ENCODE measurements at regions of chr9 and their contacts with region 1.

Region 1: DNA sequence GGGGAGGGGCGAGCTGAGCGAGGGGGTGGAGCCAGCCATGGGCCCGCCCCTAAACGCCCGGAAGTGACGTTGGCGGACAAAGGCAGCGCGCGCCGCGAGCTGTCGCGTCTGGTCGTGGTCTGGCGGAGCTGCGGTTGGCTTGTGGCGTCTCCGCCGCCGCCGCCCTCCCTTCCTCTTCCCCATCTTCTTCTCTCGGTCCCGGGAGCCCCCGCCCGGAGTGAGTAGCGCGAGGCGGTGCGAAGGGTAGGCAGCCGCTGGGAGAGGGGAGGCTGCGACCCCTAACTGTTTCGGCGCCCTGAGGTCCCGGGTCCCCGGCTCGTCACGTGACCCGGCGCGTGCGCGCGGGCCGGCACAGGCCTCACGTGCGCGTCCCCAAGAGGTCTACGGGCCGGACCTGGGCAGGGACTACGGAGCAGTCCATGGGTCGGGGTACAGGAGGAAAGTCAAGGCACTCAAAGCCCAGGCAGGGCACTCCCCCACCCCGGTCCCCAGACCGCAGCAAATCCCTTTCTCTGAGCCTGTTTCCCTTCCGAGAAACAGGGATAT is at the start of gene NTMT1:
- DNase-seq: peak; percentile 88 to 94 (median 90)
- ATAC-seq: peak; percentile 93
- H3K4me3 ChIP-seq: peak within 1 kb of the TSS; percentile 85
- H3K4me3 Mint-ChIP-seq: peak within 1 kb of the TSS; percentile 85 to 95 (median 88)
- H3K27ac ChIP-seq: peak within 1 kb of the TSS; percentile 89
- H3K27ac Mint-ChIP-seq: peak within 1 kb of the TSS; percentile 88 to 99 (median 94)
- H3K4me1 ChIP-seq: peaks cover 27 to 42% of the 10 kb centered on the region in 2 donors
- H3K4me1 Mint-ChIP-seq: peaks cover 33 to 63% (median 59%) of the 10 kb centered on the region in 7 donors
- H3K27me3 ChIP-seq: no peaks in the 10 kb centered on the region
- H3K27me3 Mint-ChIP-seq: peaks cover 4 to 18% (median 7%) of the 10 kb centered on the region in 5 donors
- total RNA-seq, gene NTMT1: 31.0 to 50.1 (median 34.2) TPM

Region 2: GRCh38 chr9:129080602-129081387 is 545.4 kb before region 1 on chr9 and contains the start of gene DOLPP1:
- CTCF ChIA-PET with region 1: no interaction called
- POLR2A ChIA-PET with region 1: no interaction called
- intact Hi-C with region 1: loop called in 1 of 2 experiments (anchors 1 kb)
- DNase-seq: peak; percentile 96 to 99 (median 99)
- ATAC-seq: peak; percentile 97
- H3K4me3 ChIP-seq: peak within 1 kb of the TSS; percentile 82
- H3K4me3 Mint-ChIP-seq: peak within 1 kb of the TSS; percentile 88 to 94 (median 90)
- H3K27ac ChIP-seq: peak within 1 kb of the TSS; percentile 79
- H3K27ac Mint-ChIP-seq: peak within 1 kb of the TSS; percentile 69 to 93 (median 87)
- H3K4me1 ChIP-seq: peaks cover 19 to 20% of the 10 kb centered on the region in 2 donors
- H3K4me1 Mint-ChIP-seq: peaks cover 6 to 41% (median 26%) of the 10 kb centered on the region in 7 donors
- H3K27me3 ChIP-seq: no peaks in the 10 kb centered on the region
- H3K27me3 Mint-ChIP-seq: no peaks in the 10 kb centered on the region
- total RNA-seq, gene DOLPP1: 5.7 to 17.1 (median 11.9) TPM

Region 3: DNA sequence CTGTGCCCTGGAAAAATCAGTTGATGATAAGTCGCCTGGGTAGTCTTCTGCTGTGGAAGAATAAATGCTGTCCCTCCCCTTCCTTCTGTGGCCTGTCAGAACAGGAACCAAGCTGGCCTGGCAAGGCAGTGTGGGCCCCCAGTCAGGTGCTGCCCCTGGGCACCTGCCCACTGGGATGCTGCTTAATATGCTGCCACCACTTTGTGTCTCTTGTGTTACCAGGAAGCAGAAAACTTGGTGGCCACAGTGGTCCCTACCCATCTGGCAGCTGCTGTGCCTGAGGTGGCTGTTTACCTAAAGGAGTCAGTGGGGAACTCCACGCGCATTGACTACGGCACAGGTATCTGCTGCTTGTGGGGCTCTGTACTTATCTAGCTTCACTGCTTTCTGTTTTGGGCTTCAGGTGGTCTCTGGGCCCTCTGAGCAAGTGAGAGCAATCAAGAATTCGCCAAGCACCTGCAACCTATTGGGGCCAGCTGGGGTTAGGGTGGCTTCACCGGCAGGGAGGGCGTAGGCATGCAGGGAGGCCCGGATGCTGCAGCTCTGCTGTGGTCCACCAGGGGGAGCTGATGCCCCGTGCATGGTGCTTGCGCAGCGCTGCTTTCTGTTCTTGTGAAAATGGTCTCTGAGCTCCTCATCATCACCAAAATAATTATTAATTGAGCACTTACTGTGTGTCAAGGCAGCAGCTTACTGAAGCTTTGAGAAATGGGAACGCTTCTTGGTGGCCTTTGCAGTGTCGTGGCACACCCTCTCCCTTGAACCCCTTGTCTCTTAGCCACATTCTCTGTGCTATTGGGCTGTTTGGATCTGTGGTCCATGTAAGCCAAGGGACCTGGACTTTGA is 494.6 kb before region 1 on chr9:
- CTCF ChIA-PET with region 1: interaction called, 58 read pairs
- POLR2A ChIA-PET with region 1: interaction called, 9 read pairs
- intact Hi-C with region 1: no loop called
- DNase-seq: peak; percentile 71 to 90 (median 81)
- ATAC-seq: peak; percentile 100
- H3K4me3 ChIP-seq: no peak overlapping the region
- H3K4me3 Mint-ChIP-seq: peak overlapping the region in 2 of 10 donors; percentile 10 to 23
- H3K27ac ChIP-seq: peak overlapping the region; percentile 24
- H3K27ac Mint-ChIP-seq: peak overlapping the region in 6 of 9 donors; percentile 11 to 54 (median 46)
- H3K4me1 ChIP-seq: no peaks in the 10 kb centered on the region
- H3K4me1 Mint-ChIP-seq: peaks cover 0 to 9% (median 6%) of the 10 kb centered on the region in 7 donors
- H3K27me3 ChIP-seq: no peaks in the 10 kb centered on the region
- H3K27me3 Mint-ChIP-seq: no peaks in the 10 kb centered on the region

Region 4: GRCh38 chr9:129641746-129642513 is 15.8 kb after region 1 on chr9 and contains the start of gene ASB6:
- CTCF ChIA-PET with region 1: interaction called, 7 read pairs
- POLR2A ChIA-PET with region 1: interaction called, 24 read pairs
- intact Hi-C with region 1: loop called (anchors 1 kb)
- DNase-seq: peak; percentile 80 to 100 (median 87)
- ATAC-seq: peak; percentile 96
- H3K4me3 ChIP-seq: peak within 1 kb of the TSS; percentile 97
- H3K4me3 Mint-ChIP-seq: peak within 1 kb of the TSS; percentile 81 to 90 (median 86)
- H3K27ac ChIP-seq: peak within 1 kb of the TSS; percentile 80
- H3K27ac Mint-ChIP-seq: peak within 1 kb of the TSS; percentile 80 to 95 (median 89)
- H3K4me1 ChIP-seq: peaks cover 16 to 18% of the 10 kb centered on the region in 2 donors
- H3K4me1 Mint-ChIP-seq: peaks cover 19 to 31% (median 23%) of the 10 kb centered on the region in 7 donors
- H3K27me3 ChIP-seq: no peaks in the 10 kb centered on the region
- H3K27me3 Mint-ChIP-seq: no peaks in the 10 kb centered on the region
- total RNA-seq, gene ASB6: 25.0 to 33.2 (median 28.1) TPM

Region 5: DNA sequence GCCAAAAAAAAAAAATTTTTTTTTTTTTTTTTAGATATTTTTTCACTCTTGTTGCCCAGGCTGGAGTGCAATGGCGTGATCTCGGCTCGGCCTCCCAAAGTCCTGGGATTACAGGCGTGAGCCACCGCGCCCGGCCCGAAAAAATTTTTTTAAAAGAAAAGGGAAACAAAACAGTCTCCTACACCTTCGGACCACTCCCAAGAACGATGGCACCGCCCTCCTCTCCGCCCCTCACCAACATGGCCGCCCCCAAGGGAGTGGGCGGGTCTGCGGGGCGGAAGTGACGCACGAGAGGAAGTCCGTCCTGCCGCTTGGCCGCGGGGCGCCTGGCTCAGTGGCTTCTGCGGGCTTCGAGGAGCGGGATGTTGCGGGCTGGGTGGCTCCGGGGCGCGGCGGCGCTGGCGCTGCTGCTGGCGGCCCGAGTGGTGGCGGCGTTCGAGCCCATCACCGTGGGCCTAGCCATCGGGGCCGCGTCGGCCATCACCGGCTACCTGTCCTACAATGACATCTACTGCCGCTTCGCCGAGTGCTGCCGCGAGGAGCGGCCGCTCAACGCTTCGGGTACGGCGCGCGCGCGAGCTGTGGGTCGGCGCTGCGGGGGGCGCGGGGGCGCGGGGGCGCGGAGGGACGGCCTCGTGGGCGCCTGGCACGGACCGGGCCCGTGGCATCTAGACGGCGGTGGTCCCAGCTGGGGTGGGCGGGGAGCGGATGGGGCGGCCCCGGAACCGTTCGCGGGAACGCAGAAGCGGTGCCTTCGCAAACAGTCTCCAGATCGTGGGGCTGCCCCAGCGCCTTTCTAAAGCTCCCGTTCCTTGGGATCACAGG is 176.9 kb after region 1 on chr9 and contains the start of gene TOR1B:
- CTCF ChIA-PET with region 1: no interaction called
- POLR2A ChIA-PET with region 1: no interaction called
- intact Hi-C with region 1: loop called in 1 of 2 experiments (anchors 5 kb)
- DNase-seq: peak; percentile 91 to 97 (median 94)
- ATAC-seq: peak; percentile 97
- H3K4me3 ChIP-seq: peak within 1 kb of the TSS; percentile 73
- H3K4me3 Mint-ChIP-seq: peak within 1 kb of the TSS; percentile 87 to 95 (median 90)
- H3K27ac ChIP-seq: peak within 1 kb of the TSS; percentile 79
- H3K27ac Mint-ChIP-seq: peak within 1 kb of the TSS; percentile 85 to 97 (median 94)
- H3K4me1 ChIP-seq: peaks cover 12 to 20% of the 10 kb centered on the region in 2 donors
- H3K4me1 Mint-ChIP-seq: peaks cover 15 to 34% (median 28%) of the 10 kb centered on the region in 7 donors
- H3K27me3 ChIP-seq: no peaks in the 10 kb centered on the region
- H3K27me3 Mint-ChIP-seq: no peaks in the 10 kb centered on the region
- total RNA-seq, gene TOR1B: 16.2 to 30.9 (median 23.9) TPM

Region 6: GRCh38 chr9:129868916-129869486 is 242.8 kb after region 1 on chr9:
- CTCF ChIA-PET with region 1: no interaction called
- POLR2A ChIA-PET with region 1: no interaction called
- intact Hi-C with region 1: loop called (anchors 5 to 10 kb)
- DNase-seq: peak; percentile 67 to 95 (median 94)
- ATAC-seq: peak; percentile 93
- H3K4me3 ChIP-seq: peak overlapping the region; percentile 57
- H3K4me3 Mint-ChIP-seq: peak overlapping the region; percentile 49 to 77 (median 64)
- H3K27ac ChIP-seq: peak overlapping the region; percentile 87
- H3K27ac Mint-ChIP-seq: peak overlapping the region; percentile 88 to 96 (median 94)
- H3K4me1 ChIP-seq: peaks cover 59 to 73% of the 10 kb centered on the region in 2 donors
- H3K4me1 Mint-ChIP-seq: peaks cover 44 to 93% (median 77%) of the 10 kb centered on the region in 7 donors
- H3K27me3 ChIP-seq: no peaks in the 10 kb centered on the region
- H3K27me3 Mint-ChIP-seq: no peaks in the 10 kb centered on the region

Measured in naive thymus-derived CD4-positive, alpha-beta T cell (primary cell).